ENCODE measurements at regions of chr7 and their contacts with region 1.

Region 1: DNA sequence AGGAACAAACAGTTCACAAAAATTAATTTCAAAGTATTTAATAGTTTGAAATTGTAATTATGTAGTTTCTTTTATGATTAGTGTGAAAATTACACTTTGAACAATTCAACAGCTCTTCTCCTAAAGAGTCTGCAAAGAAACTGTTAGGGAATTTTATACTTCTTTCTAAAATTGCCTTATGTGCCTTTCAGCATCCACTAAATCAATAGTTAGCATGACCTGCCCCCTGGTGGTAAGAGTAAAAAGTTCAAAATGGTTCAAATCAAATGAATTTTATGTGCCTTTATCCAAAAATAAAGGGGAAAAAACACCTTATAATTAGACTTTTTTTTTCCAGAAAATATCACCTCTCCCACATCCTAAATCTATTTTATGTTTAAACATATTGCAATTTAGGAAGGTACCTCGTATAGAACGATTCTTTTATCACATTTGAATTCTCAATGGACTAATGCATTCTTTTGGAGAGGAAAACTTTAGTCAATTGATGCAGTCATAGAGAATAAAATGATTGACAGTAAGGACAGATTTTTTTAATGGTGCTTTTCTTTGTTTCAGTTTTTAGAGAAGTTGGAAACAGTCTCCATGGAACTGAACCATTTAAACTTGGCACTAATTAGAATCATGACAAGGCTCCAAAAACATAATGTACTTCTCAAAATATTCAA is 163.7 kb downstream of the SEMA3D start:
- DNase-seq: no peak
- H3K4me3 ChIP-seq: no peak overlapping the region
- H3K27ac ChIP-seq: no peak overlapping the region
- H3K4me1 ChIP-seq: peaks cover 0 to 7% (median 2%) of the 10 kb centered on the region in 4 donors
- H3K27me3 ChIP-seq: no peaks in the 10 kb centered on the region
- CTCF ChIP-seq: peak; percentile 14 to 70 (median 62)
- EP300 ChIP-seq: no peak
- POLR2A ChIP-seq: no peak

Region 2: GRCh38 chr7:83936056-83936708 is 1087.0 kb before region 1 on chr7:
- intact Hi-C with region 1: loop called (anchors 1 kb)
- DNase-seq: peak; percentile 72
- H3K4me3 ChIP-seq: no peak overlapping the region
- H3K27ac ChIP-seq: no peak overlapping the region
- H3K4me1 ChIP-seq: peaks cover 0 to 5% (median 2%) of the 10 kb centered on the region in 4 donors
- H3K27me3 ChIP-seq: no peaks in the 10 kb centered on the region
- CTCF ChIP-seq: peak; percentile 39 to 91 (median 81)
- EP300 ChIP-seq: no peak
- POLR2A ChIP-seq: no peak

Region 3: GRCh38 chr7:84490661-84491060 is 532.5 kb before region 1 on chr7:
- intact Hi-C with region 1: loop called (anchors 1 kb)
- DNase-seq: no peak
- H3K4me3 ChIP-seq: peak overlapping the region; percentile 6 to 38 (median 30)
- H3K27ac ChIP-seq: peak overlapping the region in 3 of 4 donors; percentile 58 to 71 (median 60)
- H3K4me1 ChIP-seq: no peaks in the 10 kb centered on the region
- H3K27me3 ChIP-seq: no peaks in the 10 kb centered on the region
- CTCF ChIP-seq: peak in 1 of 4 experiments; percentile 13
- EP300 ChIP-seq: no peak
- POLR2A ChIP-seq: no peak

Region 4: DNA sequence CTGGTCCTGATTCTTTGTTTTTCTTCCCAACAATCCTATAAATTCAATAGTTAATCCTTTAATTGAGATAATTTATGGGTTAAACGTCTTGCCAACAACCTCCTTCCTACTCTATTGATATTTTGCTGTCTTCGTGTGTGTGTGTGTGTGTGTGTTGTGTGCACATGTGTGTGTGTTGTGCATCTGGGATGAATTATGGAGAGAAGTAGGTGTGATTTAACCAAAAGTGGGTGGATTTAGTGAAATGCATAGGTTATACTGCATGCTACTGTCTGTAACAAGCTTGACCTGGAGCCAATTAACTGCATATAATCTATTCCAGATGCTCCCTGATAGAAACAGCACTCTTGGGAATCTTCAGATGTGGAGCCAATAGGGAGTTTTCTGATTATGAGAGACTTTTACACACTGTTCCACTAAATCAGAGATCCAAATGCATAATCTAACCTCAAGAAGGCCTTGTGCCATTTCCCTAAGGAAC is 102.5 kb after region 1 on chr7:
- intact Hi-C with region 1: no loop called
- DNase-seq: no peak
- H3K4me3 ChIP-seq: no peak overlapping the region
- H3K27ac ChIP-seq: no peak overlapping the region
- H3K4me1 ChIP-seq: no peaks in the 10 kb centered on the region
- H3K27me3 ChIP-seq: no peaks in the 10 kb centered on the region
- CTCF ChIP-seq: no peak
- EP300 ChIP-seq: no peak
- POLR2A ChIP-seq: no peak

Measured in sigmoid colon (tissue), 7 donors.